ENCODE measurements at regions of chr16 and their contacts with region 1.

Region 1: GRCh38 chr16:70364399-70364798 is 17.7 kb downstream of the DDX19A start:
- DNase-seq: no peak

Region 2: GRCh38 chr16:70646260-70647241 is 282.2 kb after region 1 on chr16 and contains the start of gene IL34:
- intact Hi-C with region 1: loop called (anchors 10 kb)
- DNase-seq: peak; percentile 82
- total RNA-seq, gene IL34: 4.0 to 4.3 TPM

Measured in posterior vena cava (tissue), 2 donors.